ENCODE measurements at regions of chr16 and their contacts with region 1.

Region 1: GRCh38 chr16:22001591-22001990 is 675 bp upstream of the PDZD9 start:
- DNase-seq: no peak
- H3K4me3 ChIP-seq: no peak overlapping the region
- CTCF ChIP-seq: no peak

Region 2: GRCh38 chr16:22077700-22078313 is 76.2 kb after region 1 on chr16:
- in situ Hi-C with region 1: loop called (anchors 5 kb)
- DNase-seq: peak; percentile 39
- H3K4me3 ChIP-seq: no peak overlapping the region
- CTCF ChIP-seq: peak; percentile 85